ENCODE measurements at regions of chr4 and their contacts with region 1.

Region 1: DNA sequence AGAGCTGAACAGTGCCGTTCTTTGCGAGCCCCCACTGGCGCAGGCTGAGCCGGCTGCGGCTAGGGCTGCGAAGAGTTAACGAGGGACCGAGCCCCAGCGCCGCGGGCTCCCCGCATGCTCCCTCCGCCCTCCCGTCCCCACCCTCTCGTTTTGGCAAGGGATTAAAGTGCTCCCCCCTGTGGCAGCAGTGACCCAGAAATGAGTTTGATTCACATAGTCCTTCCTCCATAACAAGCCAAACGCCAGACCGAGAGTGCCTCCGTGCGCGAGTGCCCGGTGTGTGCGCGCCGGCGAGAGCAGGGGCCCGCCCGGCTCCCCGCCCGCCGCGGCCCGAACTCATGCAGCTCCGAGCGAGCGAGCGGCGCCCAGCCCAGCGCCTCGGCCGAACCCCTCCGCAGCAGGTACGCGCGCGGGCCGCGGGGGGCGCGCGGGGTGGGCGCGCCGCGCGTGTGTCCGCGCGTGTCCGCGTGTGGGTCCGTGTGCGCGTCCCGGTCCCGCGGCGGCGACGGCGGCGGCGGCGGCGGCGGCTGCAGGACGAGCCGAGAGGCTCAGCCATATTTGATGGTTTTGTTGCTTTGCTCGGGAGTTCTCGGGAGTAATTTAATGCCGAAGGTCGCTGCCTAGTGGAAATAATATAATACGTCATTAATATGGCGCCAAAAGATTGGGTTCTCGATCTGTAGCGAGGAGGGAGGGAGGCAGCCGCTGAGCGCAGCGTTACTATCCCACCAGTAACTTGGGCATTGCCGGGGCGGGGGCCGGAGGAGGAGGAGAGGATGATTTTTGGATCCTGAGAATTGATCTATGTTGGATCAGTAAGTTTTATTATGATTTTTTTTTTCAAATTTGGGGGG is at the start of gene JADE1:
- DNase-seq: peak; percentile 94
- ATAC-seq: peak; percentile 69
- H3K4me3 Mint-ChIP-seq: peak within 1 kb of the TSS; percentile 93
- H3K27ac Mint-ChIP-seq: peak within 1 kb of the TSS; percentile 99
- H3K4me1 Mint-ChIP-seq: peaks cover 13% of the 10 kb centered on the region
- H3K27me3 Mint-ChIP-seq: no peaks in the 10 kb centered on the region
- total RNA-seq, gene JADE1: 25.5 to 28.4 TPM

Region 2: GRCh38 chr4:127965062-127965802 is 844.5 kb before region 1 on chr4 and contains the starts of genes ABHD18 and MFSD8:
- CTCF ChIA-PET with region 1: no interaction called
- POLR2A ChIA-PET with region 1: no interaction called
- intact Hi-C with region 1: loop called in 1 of 2 experiments (anchors 1 kb)
- DNase-seq: peak; percentile 100
- ATAC-seq: peak; percentile 97
- H3K4me3 Mint-ChIP-seq: peak within 1 kb of the TSS; percentile 90
- H3K27ac Mint-ChIP-seq: peak within 1 kb of the TSS; percentile 97
- H3K4me1 Mint-ChIP-seq: peaks cover 32% of the 10 kb centered on the region
- H3K27me3 Mint-ChIP-seq: no peaks in the 10 kb centered on the region
- total RNA-seq, gene ABHD18: 23.5 to 24.2 TPM
- total RNA-seq, gene MFSD8: 10.2 to 13.8 TPM

Region 3: GRCh38 chr4:128191115-128191781 is 618.5 kb before region 1 on chr4:
- CTCF ChIA-PET with region 1: no interaction called
- POLR2A ChIA-PET with region 1: no interaction called
- intact Hi-C with region 1: loop called (anchors 1 kb)
- DNase-seq: peak; percentile 84
- ATAC-seq: peak; percentile 100
- H3K4me3 Mint-ChIP-seq: no peak overlapping the region
- H3K27ac Mint-ChIP-seq: no peak overlapping the region
- H3K4me1 Mint-ChIP-seq: no peaks in the 10 kb centered on the region
- H3K27me3 Mint-ChIP-seq: no peaks in the 10 kb centered on the region

Region 4: DNA sequence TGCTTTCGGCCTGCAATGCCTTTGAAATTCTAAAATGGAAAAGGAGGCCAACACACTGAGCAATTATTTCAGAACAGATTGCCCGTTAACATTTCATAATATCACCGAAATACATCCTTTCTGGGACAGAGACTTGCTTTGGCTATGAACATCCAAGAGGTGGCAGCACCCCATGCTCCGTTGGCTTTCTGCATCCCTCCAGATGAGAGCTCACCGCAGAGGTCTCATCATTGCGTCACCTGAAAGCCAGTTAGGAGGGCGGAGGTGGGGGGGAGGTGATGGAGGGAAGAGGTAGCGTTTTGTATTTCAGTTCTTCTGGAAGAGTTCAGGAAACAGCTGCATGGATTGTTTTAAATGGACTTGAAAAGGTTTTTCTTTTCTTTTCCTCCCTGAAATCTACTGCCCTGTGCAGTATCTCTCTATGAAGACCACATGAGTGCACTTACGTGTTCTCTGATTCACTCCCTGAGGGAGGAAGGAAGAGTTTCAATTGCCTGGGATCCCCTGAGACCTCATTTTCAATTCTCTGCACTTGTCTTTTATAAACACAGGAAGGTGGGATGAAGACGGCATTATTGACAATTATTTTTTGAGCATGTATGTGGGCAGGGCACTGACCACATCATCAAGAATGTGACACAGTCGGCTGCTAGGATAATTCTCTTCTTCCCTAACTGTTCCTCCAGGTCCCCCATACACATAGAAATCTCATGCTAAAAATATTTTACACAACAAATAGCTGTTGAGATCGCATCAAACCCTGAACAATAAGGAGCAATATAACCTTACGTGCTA is 355.2 kb before region 1 on chr4:
- CTCF ChIA-PET with region 1: interaction called, 3 read pairs
- POLR2A ChIA-PET with region 1: no interaction called
- intact Hi-C with region 1: loop called (anchors 1 kb)
- DNase-seq: peak; percentile 84
- ATAC-seq: peak; percentile 98
- H3K4me3 Mint-ChIP-seq: no peak overlapping the region
- H3K27ac Mint-ChIP-seq: no peak overlapping the region
- H3K4me1 Mint-ChIP-seq: peaks cover 11% of the 10 kb centered on the region
- H3K27me3 Mint-ChIP-seq: peaks cover 2% of the 10 kb centered on the region

Region 5: GRCh38 chr4:128574706-128575105 is 235.0 kb before region 1 on chr4:
- CTCF ChIA-PET with region 1: interaction called, 3 read pairs
- POLR2A ChIA-PET with region 1: no interaction called
- intact Hi-C with region 1: loop called (anchors 1 kb)
- DNase-seq: peak; percentile 87
- ATAC-seq: peak; percentile 84
- H3K4me3 Mint-ChIP-seq: no peak overlapping the region
- H3K27ac Mint-ChIP-seq: no peak overlapping the region
- H3K4me1 Mint-ChIP-seq: no peaks in the 10 kb centered on the region
- H3K27me3 Mint-ChIP-seq: no peaks in the 10 kb centered on the region

Region 6: DNA sequence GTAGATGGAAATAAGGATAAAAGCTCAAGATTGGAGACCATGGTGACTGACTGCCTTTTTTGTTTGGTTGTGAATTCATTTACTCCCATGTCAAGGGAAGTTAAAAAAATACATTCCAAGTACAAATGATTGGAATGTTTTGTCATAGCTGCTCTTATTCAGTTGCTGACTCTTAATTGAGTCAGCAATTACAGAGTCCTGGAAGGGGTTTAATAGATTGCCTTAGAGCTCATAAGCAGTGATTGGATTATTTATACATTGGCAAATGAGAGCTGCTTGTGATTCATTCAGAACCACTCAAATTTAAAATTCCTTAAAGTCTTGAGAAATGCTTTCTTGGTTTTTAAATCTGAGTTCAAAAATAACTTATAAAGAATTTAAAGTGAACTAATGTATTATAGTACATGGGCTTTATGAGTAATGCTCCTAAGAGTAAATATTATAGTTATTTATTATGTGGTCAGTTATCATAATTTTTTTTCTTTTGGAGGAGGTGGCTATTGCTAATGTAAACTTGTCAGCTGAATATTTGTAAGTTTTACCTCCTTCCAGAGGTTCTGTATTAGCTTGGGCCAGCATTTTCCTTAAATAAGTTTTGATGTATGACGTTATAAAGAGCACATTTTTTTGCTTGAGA is 13.4 kb after region 1 on chr4:
- CTCF ChIA-PET with region 1: interaction called, 7 read pairs
- POLR2A ChIA-PET with region 1: interaction called, 20 read pairs
- intact Hi-C with region 1: no loop called
- DNase-seq: no peak
- ATAC-seq: no peak
- H3K4me3 Mint-ChIP-seq: no peak overlapping the region
- H3K27ac Mint-ChIP-seq: peak overlapping the region; percentile 18
- H3K4me1 Mint-ChIP-seq: peaks cover 77% of the 10 kb centered on the region
- H3K27me3 Mint-ChIP-seq: no peaks in the 10 kb centered on the region

Region 7: GRCh38 chr4:129093191-129093920 is 283.7 kb after region 1 on chr4 and contains the start of gene SCLT1:
- CTCF ChIA-PET with region 1: no interaction called
- POLR2A ChIA-PET with region 1: interaction called, 13 read pairs
- intact Hi-C with region 1: loop called (anchors 1 kb)
- DNase-seq: peak; percentile 98
- ATAC-seq: peak; percentile 94
- H3K4me3 Mint-ChIP-seq: no peak within 1 kb of the TSS
- H3K27ac Mint-ChIP-seq: peak within 1 kb of the TSS; percentile 35
- H3K4me1 Mint-ChIP-seq: peaks cover 27% of the 10 kb centered on the region
- H3K27me3 Mint-ChIP-seq: no peaks in the 10 kb centered on the region
- total RNA-seq, gene SCLT1: 18.7 to 19.3 TPM